Cardiac septum (tissue), 1 donor: ENCODE measurements at regions of chr5 and their contacts with region 1.

Region 1: DNA sequence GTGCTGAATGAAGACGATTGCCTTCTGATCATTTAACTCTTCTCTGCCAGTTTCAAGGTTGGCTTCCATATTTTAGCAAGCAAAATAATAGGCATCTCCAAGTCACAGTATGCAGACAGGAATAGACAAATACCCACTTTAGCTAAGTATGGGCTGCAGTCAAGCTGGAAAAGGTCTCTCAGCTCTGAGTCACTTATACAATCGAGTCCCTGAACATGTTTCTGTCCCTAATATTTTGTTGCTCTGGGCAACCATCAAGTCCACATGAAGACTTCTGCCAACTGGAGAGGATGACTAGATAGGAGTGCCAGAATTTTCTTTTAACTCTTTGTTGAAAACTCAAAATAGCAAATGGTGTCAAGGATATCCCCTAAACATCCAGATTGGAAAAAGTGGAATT is 575.3 kb downstream of the RAB3C start:
- DNase-seq: no peak

Region 2: GRCh38 chr5:59139695-59140094 is 18.5 kb before region 1 on chr5:
- intact Hi-C with region 1: loop called (anchors 1 kb)
- DNase-seq: no peak